Activated T-helper 2 cell treated with anti-CD3 and anti-CD28 coated beads, Interferon-gamma antibody, Interleukin-2, Interleukin-4, amounts not matched to agents 10 μg/mL and 5 μg/mL and 100 μg/mL, durations not matched to agents 14 hours and 24 hours and 36 hours (primary cell): ENCODE measurements at regions of chr13 and their contacts with region 1.

Region 1: DNA sequence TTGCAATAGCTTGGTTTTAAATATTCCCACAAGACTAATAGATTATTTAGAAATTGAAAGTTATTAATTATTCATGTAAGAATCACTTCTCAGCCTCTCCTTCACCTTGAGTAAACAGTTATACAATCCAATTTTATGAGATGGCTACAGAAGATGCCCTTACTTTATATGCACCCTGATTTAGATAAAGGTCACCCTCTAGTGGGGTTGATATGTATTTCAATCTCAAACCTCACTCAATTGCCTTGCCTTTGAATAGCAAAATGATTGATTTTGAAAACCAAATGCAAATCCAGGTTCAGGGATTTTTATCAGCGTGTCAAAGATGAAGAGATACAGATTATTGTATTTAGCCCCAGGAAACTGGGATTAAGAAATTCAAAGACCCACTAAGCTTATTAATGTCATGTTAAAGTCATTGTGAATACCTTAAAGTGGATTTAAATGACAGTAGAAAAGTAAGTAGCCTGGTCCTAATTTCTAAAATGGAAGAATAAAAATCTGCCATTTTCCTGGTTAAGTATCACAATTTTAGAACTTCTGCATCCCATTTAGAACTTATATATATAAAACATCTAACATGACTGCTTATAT is 305.1 kb downstream of the ITGBL1 start:
- DNase-seq: no peak
- H3K4me3 Mint-ChIP-seq: no peak overlapping the region
- H3K27ac Mint-ChIP-seq: no peak overlapping the region
- H3K4me1 Mint-ChIP-seq: no peaks in the 10 kb centered on the region
- H3K27me3 Mint-ChIP-seq: peaks cover 2% of the 10 kb centered on the region

Region 2: DNA sequence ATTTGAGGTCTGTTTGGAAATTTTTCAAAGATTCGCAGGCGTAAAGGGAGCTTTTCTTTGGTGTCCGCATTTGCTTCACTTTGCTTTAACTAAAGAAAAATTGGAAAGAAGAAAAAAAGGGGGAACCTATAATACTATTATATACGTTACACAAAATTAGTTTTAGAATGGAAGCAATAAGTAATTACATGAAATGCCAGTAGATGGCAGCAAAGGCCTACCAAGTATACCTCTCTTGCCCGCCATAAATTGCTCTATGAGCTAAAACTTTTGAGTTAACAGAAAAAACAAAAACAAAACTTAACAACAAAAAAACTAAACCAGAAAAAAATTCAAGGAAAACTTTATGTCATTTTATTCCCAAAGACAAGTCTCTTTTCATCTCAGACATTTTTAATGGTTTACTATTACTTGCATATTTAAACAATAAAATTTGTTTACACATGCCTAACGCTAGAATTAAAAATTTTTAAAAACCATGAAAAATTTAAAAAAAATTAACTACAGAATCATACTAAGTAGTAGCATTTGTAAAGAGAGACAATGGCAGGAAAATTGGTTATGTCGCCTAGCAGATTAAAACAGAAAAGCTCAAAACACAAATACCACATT is 612.6 kb before region 1 on chr13:
- intact Hi-C with region 1: loop called (anchors 2 kb)
- DNase-seq: no peak
- H3K4me3 Mint-ChIP-seq: no peak overlapping the region
- H3K27ac Mint-ChIP-seq: no peak overlapping the region
- H3K4me1 Mint-ChIP-seq: no peaks in the 10 kb centered on the region
- H3K27me3 Mint-ChIP-seq: peaks cover 5% of the 10 kb centered on the region

Region 3: GRCh38 chr13:101514788-101515187 is 242.8 kb before region 1 on chr13:
- intact Hi-C with region 1: loop called (anchors 1 kb)
- DNase-seq: no peak
- H3K4me3 Mint-ChIP-seq: no peak overlapping the region
- H3K27ac Mint-ChIP-seq: no peak overlapping the region
- H3K4me1 Mint-ChIP-seq: peaks cover 6% of the 10 kb centered on the region
- H3K27me3 Mint-ChIP-seq: peaks cover 18% of the 10 kb centered on the region